Activated CD8-positive, alpha-beta T cell treated with anti-CD3 and anti-CD28 coated beads for 36 hours (primary cell): ENCODE measurements at regions of chr9 and their contacts with region 1.

Region 1: GRCh38 chr9:110152704-110153374 is 55.1 kb downstream of the C9orf152 start:
- DNase-seq: peak; percentile 31
- ATAC-seq: no peak
- H3K4me3 Mint-ChIP-seq: no peak overlapping the region
- H3K27ac Mint-ChIP-seq: no peak overlapping the region
- H3K4me1 Mint-ChIP-seq: peaks cover 44% of the 10 kb centered on the region
- H3K27me3 Mint-ChIP-seq: no peaks in the 10 kb centered on the region
- CTCF ChIP-seq: peak; percentile 69

Region 2: DNA sequence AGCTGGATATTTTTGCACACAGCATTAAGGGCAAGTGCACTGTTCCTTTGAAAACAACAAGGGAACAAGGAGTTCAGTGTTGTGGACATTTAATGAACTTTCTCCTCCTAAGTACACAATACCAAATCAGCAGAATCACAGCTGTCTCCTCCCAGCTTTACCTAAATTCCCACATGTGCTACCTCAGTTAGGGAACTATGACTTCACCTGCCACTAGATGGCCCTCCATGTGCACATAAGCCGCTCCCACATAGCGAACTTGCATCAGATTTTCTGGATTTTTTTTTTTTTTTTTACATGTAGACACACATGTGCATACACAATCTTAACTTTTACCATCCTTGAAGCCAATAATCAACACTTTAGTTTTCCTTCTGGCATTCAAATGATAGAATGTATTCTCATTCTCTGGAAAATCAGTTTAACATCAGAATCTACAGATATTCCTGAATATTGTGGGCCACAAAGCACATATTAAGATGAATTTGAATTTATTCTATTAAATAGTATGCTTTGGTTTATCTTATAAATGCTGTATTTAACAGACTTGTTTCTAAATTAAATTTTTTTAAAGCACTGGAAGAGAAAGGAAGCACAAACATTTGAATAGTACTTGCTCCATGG is 249.2 kb before region 1 on chr9:
- CTCF ChIA-PET with region 1: interaction called, 74 read pairs
- POLR2A ChIA-PET with region 1: no interaction called
- intact Hi-C with region 1: loop called (anchors 2 kb)
- DNase-seq: peak; percentile 74
- ATAC-seq: peak; percentile 73
- H3K4me3 Mint-ChIP-seq: no peak overlapping the region
- H3K27ac Mint-ChIP-seq: no peak overlapping the region
- H3K4me1 Mint-ChIP-seq: no peaks in the 10 kb centered on the region
- H3K27me3 Mint-ChIP-seq: peaks cover under 1% of the 10 kb centered on the region
- CTCF ChIP-seq: peak; percentile 86

Region 3: GRCh38 chr9:109972026-109972882 is 180.6 kb before region 1 on chr9:
- CTCF ChIA-PET with region 1: interaction called, 4 read pairs
- POLR2A ChIA-PET with region 1: no interaction called
- intact Hi-C with region 1: loop called (anchors 5 kb)
- DNase-seq: peak; percentile 41
- ATAC-seq: peak; percentile 55
- H3K4me3 Mint-ChIP-seq: no peak overlapping the region
- H3K27ac Mint-ChIP-seq: no peak overlapping the region
- H3K4me1 Mint-ChIP-seq: peaks cover 46% of the 10 kb centered on the region
- H3K27me3 Mint-ChIP-seq: no peaks in the 10 kb centered on the region
- CTCF ChIP-seq: no peak

Region 4: GRCh38 chr9:110029429-110029955 is 123.3 kb before region 1 on chr9:
- CTCF ChIA-PET with region 1: no interaction called
- POLR2A ChIA-PET with region 1: no interaction called
- intact Hi-C with region 1: no loop called
- DNase-seq: no peak
- ATAC-seq: no peak
- H3K4me3 Mint-ChIP-seq: no peak overlapping the region
- H3K27ac Mint-ChIP-seq: no peak overlapping the region
- H3K4me1 Mint-ChIP-seq: peaks cover 13% of the 10 kb centered on the region
- H3K27me3 Mint-ChIP-seq: peaks cover 2% of the 10 kb centered on the region
- CTCF ChIP-seq: no peak

Region 5: DNA sequence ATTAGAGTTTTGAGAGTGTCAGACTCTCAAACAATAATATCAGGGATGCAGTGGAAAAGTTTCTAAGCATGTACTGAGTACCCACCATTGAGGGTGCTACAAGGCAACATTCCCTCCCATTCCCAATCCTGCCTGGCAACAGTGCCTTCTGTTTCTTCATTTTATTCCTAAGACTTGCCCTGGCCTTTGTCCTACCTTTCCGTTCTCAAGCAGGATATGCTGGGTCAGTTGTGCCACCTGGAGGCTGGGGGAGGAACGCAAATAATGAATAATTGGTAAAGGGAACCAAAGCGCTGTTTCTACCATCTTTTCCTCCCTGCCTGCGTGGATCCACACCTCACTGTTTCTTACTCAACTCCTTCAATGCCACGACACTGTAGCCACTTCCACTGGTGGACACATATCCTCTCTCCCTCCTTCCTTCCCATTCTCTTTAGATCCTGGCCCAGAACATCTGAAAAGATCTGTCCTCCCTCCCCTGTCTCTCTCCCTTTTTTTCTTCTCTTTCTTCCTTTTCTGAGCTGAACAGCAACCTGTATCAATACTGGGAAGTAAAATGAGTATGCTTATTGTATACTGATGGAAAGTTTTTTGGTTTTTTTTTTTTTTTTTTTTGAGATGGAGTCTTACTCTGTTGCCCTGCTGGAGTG is 94.4 kb before region 1 on chr9:
- CTCF ChIA-PET with region 1: interaction called, 17 read pairs
- POLR2A ChIA-PET with region 1: no interaction called
- intact Hi-C with region 1: no loop called
- DNase-seq: peak; percentile 64
- ATAC-seq: peak; percentile 65
- H3K4me3 Mint-ChIP-seq: no peak overlapping the region
- H3K27ac Mint-ChIP-seq: no peak overlapping the region
- H3K4me1 Mint-ChIP-seq: no peaks in the 10 kb centered on the region
- H3K27me3 Mint-ChIP-seq: peaks cover 4% of the 10 kb centered on the region
- CTCF ChIP-seq: peak; percentile 57

Region 6: GRCh38 chr9:110266795-110267194 is 114.0 kb after region 1 on chr9:
- CTCF ChIA-PET with region 1: no interaction called
- POLR2A ChIA-PET with region 1: no interaction called
- intact Hi-C with region 1: no loop called
- DNase-seq: no peak
- ATAC-seq: no peak
- H3K4me3 Mint-ChIP-seq: no peak overlapping the region
- H3K27ac Mint-ChIP-seq: no peak overlapping the region
- H3K4me1 Mint-ChIP-seq: no peaks in the 10 kb centered on the region
- H3K27me3 Mint-ChIP-seq: peaks cover 2% of the 10 kb centered on the region
- CTCF ChIP-seq: no peak

Region 7: GRCh38 chr9:110427497-110428104 is 274.8 kb after region 1 on chr9:
- CTCF ChIA-PET with region 1: no interaction called
- POLR2A ChIA-PET with region 1: no interaction called
- intact Hi-C with region 1: no loop called
- DNase-seq: peak; percentile 57
- ATAC-seq: no peak
- H3K4me3 Mint-ChIP-seq: no peak overlapping the region
- H3K27ac Mint-ChIP-seq: no peak overlapping the region
- H3K4me1 Mint-ChIP-seq: no peaks in the 10 kb centered on the region
- H3K27me3 Mint-ChIP-seq: no peaks in the 10 kb centered on the region
- CTCF ChIP-seq: peak; percentile 30